Heart right ventricle (tissue), 16 donors: ENCODE measurements at regions of chr17 and their contacts with region 1.

Region 1: GRCh38 chr17:42474276-42474675 is 15.6 kb downstream of the ATP6V0A1 start:
- DNase-seq: no peak
- ATAC-seq: no peak
- H3K4me3 ChIP-seq: no peak overlapping the region
- H3K27ac ChIP-seq: peak overlapping the region in 1 of 10 donors; percentile 38
- H3K4me1 ChIP-seq: peaks cover 0 to 21% (median 0%) of the 10 kb centered on the region in 9 donors
- H3K27me3 ChIP-seq: no peaks in the 10 kb centered on the region
- CTCF ChIP-seq: no peak

Region 2: GRCh38 chr17:42266918-42267778 is 207.1 kb before region 1 on chr17:
- intact Hi-C with region 1: no loop called
- DNase-seq: no peak
- ATAC-seq: no peak
- H3K4me3 ChIP-seq: no peak overlapping the region
- H3K27ac ChIP-seq: peak overlapping the region in 1 of 10 donors; percentile 58
- H3K4me1 ChIP-seq: peaks cover 0 to 44% (median 3%) of the 10 kb centered on the region in 9 donors
- H3K27me3 ChIP-seq: no peaks in the 10 kb centered on the region
- CTCF ChIP-seq: no peak

Region 3: DNA sequence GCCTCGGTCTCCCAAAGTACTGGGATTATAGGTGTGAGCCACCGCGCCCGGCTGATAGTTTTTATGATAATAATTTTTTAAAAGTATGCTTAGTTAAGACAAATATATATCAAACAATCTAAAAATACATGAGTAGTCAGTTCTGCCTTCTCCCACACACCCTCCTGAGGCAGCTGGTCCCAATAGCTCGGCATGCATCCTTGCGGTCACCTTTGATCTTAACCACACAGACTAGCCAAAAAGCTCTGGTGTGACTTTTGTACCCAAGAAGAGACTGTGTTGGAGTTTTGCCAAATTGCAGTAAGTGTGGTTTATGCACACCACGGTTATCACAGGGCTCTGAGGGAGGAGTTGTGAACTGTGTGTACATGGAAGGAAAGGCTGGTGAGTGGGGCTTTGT is 10.0 kb after region 1 on chr17:
- intact Hi-C with region 1: loop called in 1 of 10 experiments (anchors 1 kb)
- DNase-seq: no peak
- ATAC-seq: peak in 2 of 8 donors; percentile 30 to 34
- H3K4me3 ChIP-seq: no peak overlapping the region
- H3K27ac ChIP-seq: peak overlapping the region in 1 of 10 donors; percentile 26
- H3K4me1 ChIP-seq: peaks cover 0 to 7% (median 3%) of the 10 kb centered on the region in 9 donors
- H3K27me3 ChIP-seq: no peaks in the 10 kb centered on the region
- CTCF ChIP-seq: no peak